MCF 10A (cell line): ENCODE measurements at regions of chr16 and their contacts with region 1.

Region 1: DNA sequence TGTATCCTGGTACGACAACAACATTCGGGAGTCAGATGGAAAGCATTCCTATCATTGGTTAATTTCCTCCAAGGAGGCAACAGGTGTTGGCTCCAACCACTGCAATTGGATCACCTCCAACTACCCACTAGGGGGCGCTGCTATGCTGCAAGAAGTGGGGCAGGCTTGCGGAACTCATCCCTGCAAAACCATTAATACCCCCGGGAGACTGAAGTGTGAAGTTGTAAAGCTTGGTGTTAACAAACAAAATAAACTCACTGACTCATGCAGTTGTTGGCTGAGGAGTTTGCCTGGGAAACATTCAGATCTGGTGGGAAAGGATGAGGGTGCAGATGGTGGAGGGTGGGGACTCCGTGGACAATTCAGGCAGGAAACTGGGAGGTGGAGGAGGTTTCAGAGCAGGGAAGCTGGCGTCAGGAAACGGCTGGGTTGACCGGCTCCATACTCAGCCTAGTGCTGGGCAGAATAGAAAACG is 84.9 kb downstream of the HS3ST2 start:
- DNase-seq: peak; percentile 84
- H3K4me3 Mint-ChIP-seq: no peak overlapping the region
- H3K27ac Mint-ChIP-seq: no peak overlapping the region
- H3K4me1 Mint-ChIP-seq: no peaks in the 10 kb centered on the region
- H3K27me3 Mint-ChIP-seq: peaks cover 2% of the 10 kb centered on the region
- CTCF ChIP-seq: peak; percentile 82

Region 2: GRCh38 chr16:22882981-22883380 is 15.9 kb before region 1 on chr16:
- CTCF ChIA-PET with region 1: interaction called, 13 read pairs
- POLR2A ChIA-PET with region 1: no interaction called
- intact Hi-C with region 1: no loop called
- DNase-seq: no peak
- H3K4me3 Mint-ChIP-seq: no peak overlapping the region
- H3K27ac Mint-ChIP-seq: no peak overlapping the region
- H3K4me1 Mint-ChIP-seq: no peaks in the 10 kb centered on the region
- H3K27me3 Mint-ChIP-seq: peaks cover 50% of the 10 kb centered on the region
- CTCF ChIP-seq: no peak

Region 3: GRCh38 chr16:22948603-22949368 is 49.9 kb after region 1 on chr16:
- CTCF ChIA-PET with region 1: interaction called, 6 read pairs
- POLR2A ChIA-PET with region 1: no interaction called
- intact Hi-C with region 1: loop called (anchors 2 kb)
- DNase-seq: peak; percentile 85
- H3K4me3 Mint-ChIP-seq: no peak overlapping the region
- H3K27ac Mint-ChIP-seq: no peak overlapping the region
- H3K4me1 Mint-ChIP-seq: no peaks in the 10 kb centered on the region
- H3K27me3 Mint-ChIP-seq: peaks cover 68% of the 10 kb centered on the region
- CTCF ChIP-seq: peak; percentile 68

Region 4: DNA sequence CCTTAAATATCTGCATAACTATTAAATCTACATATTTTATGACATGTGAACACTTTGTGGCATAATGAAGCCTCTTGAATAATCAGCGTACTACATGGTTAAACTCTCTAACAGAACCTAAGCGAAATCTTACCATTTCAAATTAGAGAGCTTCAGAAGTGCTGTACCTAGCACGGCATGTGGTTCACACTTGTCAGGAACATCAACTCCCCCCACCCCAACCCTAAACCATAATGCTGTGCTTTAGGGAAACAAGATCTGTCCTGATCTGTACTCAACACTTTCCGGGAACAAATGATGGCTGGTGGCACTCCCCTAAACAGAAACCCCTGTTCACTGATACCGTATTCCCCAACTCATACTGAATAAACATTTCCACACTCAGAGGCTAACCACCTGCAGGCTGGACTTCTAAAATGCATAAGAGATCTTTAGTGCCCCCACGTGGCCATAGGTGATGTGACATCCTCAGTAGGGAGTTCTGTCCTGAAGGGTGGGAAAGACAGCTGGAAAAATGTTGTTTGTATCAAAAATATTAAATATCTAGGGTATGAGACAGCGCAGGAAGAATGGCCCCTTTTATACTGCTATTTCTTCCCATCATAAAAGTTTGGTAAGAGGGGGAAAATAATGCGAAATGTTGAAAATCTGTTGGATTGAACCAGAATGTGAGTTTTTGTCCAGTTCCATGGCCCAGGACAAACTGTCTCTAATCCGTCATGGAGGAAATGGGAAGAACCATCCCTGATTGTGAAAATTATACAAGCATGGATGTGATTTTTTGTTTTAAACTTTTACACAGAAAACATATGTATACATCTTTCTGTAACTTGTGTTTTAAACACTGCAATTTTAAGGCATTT is 161.8 kb after region 1 on chr16:
- CTCF ChIA-PET with region 1: interaction called, 3 read pairs
- POLR2A ChIA-PET with region 1: interaction called, 4 read pairs
- intact Hi-C with region 1: loop called (anchors 1 kb)
- DNase-seq: peak; percentile 75
- H3K4me3 Mint-ChIP-seq: no peak overlapping the region
- H3K27ac Mint-ChIP-seq: no peak overlapping the region
- H3K4me1 Mint-ChIP-seq: peaks cover 1% of the 10 kb centered on the region
- H3K27me3 Mint-ChIP-seq: peaks cover 11% of the 10 kb centered on the region
- CTCF ChIP-seq: peak; percentile 60